ENCODE measurements at regions of chr11 and their contacts with region 1.

Region 1: GRCh38 chr11:102451681-102452460 is 694 bp downstream of the TMEM123 start:
- DNase-seq: peak; percentile 75
- H3K4me3 Mint-ChIP-seq: peak overlapping the region; percentile 93
- H3K27ac Mint-ChIP-seq: peak overlapping the region; percentile 94
- H3K4me1 Mint-ChIP-seq: peaks cover 86% of the 10 kb centered on the region
- H3K27me3 Mint-ChIP-seq: peaks cover 3% of the 10 kb centered on the region

Region 2: GRCh38 chr11:101914738-101915426 is 537.0 kb before region 1 on chr11 and contains the start of gene CEP126:
- intact Hi-C with region 1: loop called (anchors 10 kb)
- DNase-seq: peak; percentile 86
- H3K4me3 Mint-ChIP-seq: peak within 1 kb of the TSS; percentile 92
- H3K27ac Mint-ChIP-seq: peak within 1 kb of the TSS; percentile 74
- H3K4me1 Mint-ChIP-seq: peaks cover 22% of the 10 kb centered on the region
- H3K27me3 Mint-ChIP-seq: peaks cover 2% of the 10 kb centered on the region
- total RNA-seq, gene CEP126: 0.41 and 1.2 TPM in 2 replicates

Region 3: GRCh38 chr11:102306048-102306585 is 145.8 kb before region 1 on chr11:
- intact Hi-C with region 1: no loop called
- DNase-seq: no peak
- H3K4me3 Mint-ChIP-seq: peak overlapping the region; percentile 72
- H3K27ac Mint-ChIP-seq: peak overlapping the region; percentile 59
- H3K4me1 Mint-ChIP-seq: peaks cover 57% of the 10 kb centered on the region
- H3K27me3 Mint-ChIP-seq: no peaks in the 10 kb centered on the region

Region 4: GRCh38 chr11:102346748-102347461 is 105.0 kb before region 1 on chr11 and contains the start of gene BIRC2:
- intact Hi-C with region 1: loop called (anchors 1 kb)
- DNase-seq: peak; percentile 94
- H3K4me3 Mint-ChIP-seq: peak within 1 kb of the TSS; percentile 98
- H3K27ac Mint-ChIP-seq: peak within 1 kb of the TSS; percentile 99
- H3K4me1 Mint-ChIP-seq: peaks cover 45% of the 10 kb centered on the region
- H3K27me3 Mint-ChIP-seq: no peaks in the 10 kb centered on the region
- total RNA-seq, gene BIRC2: 30.6 and 33.3 TPM in 2 replicates

Region 5: GRCh38 chr11:102416976-102417375 is 34.9 kb before region 1 on chr11:
- intact Hi-C with region 1: loop called (anchors 1 kb)
- DNase-seq: no peak
- H3K4me3 Mint-ChIP-seq: peak overlapping the region; percentile 26
- H3K27ac Mint-ChIP-seq: peak overlapping the region; percentile 67
- H3K4me1 Mint-ChIP-seq: peaks cover 84% of the 10 kb centered on the region
- H3K27me3 Mint-ChIP-seq: no peaks in the 10 kb centered on the region

Region 6: GRCh38 chr11:102476812-102477211 is 24.9 kb after region 1 on chr11:
- intact Hi-C with region 1: loop called (anchors 1 kb)
- DNase-seq: no peak
- H3K4me3 Mint-ChIP-seq: peak overlapping the region; percentile 40
- H3K27ac Mint-ChIP-seq: peak overlapping the region; percentile 88
- H3K4me1 Mint-ChIP-seq: peaks cover 64% of the 10 kb centered on the region
- H3K27me3 Mint-ChIP-seq: peaks cover 2% of the 10 kb centered on the region

Region 7: DNA sequence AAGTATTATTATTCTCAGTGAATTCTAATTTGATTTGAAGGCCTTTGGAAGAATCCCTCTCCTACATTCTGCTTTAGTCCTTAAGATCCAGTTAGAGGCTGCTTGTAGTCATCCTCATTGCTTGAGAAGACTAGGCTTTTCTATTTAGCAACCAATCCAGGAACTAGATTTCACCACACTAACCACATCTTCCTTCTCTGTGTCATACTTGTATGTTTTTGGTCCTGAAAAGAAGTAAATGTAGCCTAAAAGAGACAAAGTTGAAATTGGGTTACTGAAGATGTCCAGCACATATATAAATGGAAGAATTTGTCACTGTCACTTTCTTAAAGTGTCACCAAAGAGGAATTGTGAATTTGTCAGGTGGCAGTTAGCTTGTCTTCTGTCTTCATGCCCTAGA is 125.3 kb after region 1 on chr11:
- intact Hi-C with region 1: no loop called
- DNase-seq: no peak
- H3K4me3 Mint-ChIP-seq: no peak overlapping the region
- H3K27ac Mint-ChIP-seq: peak overlapping the region; percentile 2
- H3K4me1 Mint-ChIP-seq: peaks cover 46% of the 10 kb centered on the region
- H3K27me3 Mint-ChIP-seq: no peaks in the 10 kb centered on the region

Region 8: GRCh38 chr11:102599642-102600261 is 147.9 kb after region 1 on chr11:
- intact Hi-C with region 1: loop called (anchors 2 kb)
- DNase-seq: no peak
- H3K4me3 Mint-ChIP-seq: no peak overlapping the region
- H3K27ac Mint-ChIP-seq: peak overlapping the region; percentile 64
- H3K4me1 Mint-ChIP-seq: peaks cover 47% of the 10 kb centered on the region
- H3K27me3 Mint-ChIP-seq: no peaks in the 10 kb centered on the region

Measured in activated T-helper 1 cell treated with anti-CD3 and anti-CD28 coated beads, Interleukin-12 subunit alpha, Interleukin-12 subunit beta, Interleukin-2, Interleukin-4 antibody, amounts not matched to agents 30 ng/mL and 10 ng/mL and 1 ng/mL, durations not matched to agents 14 hours and 24 hours and 36 hours (primary cell).